ENCODE measurements at regions of chr18 and their contacts with region 1.

Region 1: DNA sequence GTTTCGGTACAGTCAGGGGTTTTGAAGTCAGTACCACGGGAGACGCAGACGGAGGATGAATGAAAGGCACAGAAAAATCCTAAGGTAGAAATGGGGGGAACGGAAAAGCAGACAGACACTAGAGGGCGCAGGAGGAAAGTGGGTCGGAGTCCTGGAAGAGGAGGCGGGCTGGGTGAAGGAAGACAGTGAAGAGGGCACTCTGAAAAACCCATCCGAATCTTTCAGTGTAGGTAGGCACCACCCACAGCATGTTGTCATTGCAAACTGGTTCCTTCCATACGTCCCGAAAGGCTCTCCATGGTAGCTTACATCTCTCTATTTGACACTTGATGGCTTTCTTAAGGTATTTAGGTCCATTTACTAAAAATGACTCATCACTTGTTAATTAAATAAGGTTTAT is 18.5 kb upstream of the ZNF236 start:
- DNase-seq: peak; percentile 76
- H3K4me3 Mint-ChIP-seq: no peak overlapping the region
- H3K27ac Mint-ChIP-seq: no peak overlapping the region
- H3K4me1 Mint-ChIP-seq: peaks cover 18% of the 10 kb centered on the region
- H3K27me3 Mint-ChIP-seq: peaks cover 10% of the 10 kb centered on the region

Region 2: GRCh38 chr18:76398896-76399612 is 404.8 kb before region 1 on chr18:
- CTCF ChIA-PET with region 1: interaction called, 11 read pairs
- POLR2A ChIA-PET with region 1: no interaction called
- DNase-seq: peak; percentile 74
- H3K4me3 Mint-ChIP-seq: no peak overlapping the region
- H3K27ac Mint-ChIP-seq: no peak overlapping the region
- H3K4me1 Mint-ChIP-seq: no peaks in the 10 kb centered on the region
- H3K27me3 Mint-ChIP-seq: peaks cover 9% of the 10 kb centered on the region

Region 3: DNA sequence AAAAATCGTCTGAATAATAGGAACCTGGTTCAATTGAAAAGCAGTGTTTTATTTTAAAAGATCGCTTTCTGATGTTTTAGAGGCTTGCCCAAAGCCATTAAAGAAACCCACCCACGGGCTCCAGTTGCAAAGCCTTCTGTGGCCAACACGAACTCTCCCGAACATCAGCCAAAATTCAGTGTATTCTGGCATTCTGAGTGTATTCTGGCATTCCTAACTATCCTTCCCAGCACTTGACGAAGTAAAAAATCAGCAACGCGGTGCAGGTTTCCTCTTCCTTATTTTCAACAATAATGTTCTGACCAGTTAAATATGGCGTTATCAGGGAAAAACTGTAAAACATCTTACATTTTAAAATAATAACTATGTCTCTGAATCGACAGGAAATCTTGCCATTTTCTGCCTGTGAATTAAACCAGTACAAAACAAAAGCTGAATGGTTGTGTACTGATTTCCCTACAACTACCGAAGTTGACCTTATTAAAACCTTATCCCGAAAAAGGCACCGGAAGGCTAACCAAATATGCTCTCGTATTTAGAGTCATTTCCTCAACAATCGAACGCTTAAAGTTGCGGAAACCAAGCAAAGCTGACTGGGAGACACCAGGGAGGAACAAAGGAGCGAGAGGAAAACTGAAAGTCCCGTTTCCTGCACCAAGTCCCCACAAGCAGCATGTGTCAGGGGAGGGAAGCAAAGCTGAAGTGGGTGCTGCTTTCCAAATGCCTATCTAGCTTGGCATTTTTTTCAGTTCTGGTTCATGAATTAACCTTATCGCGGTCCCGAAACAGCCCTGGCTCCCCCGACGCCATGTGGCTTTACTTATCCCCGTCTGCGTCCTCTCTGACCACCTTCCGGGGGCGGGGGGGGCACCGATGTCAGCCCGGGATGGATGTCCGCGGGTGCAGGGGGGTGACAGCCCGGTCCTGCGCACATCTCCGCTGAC is 353.1 kb before region 1 on chr18:
- CTCF ChIA-PET with region 1: no interaction called
- POLR2A ChIA-PET with region 1: no interaction called
- DNase-seq: no peak
- H3K4me3 Mint-ChIP-seq: peak overlapping the region; percentile 67
- H3K27ac Mint-ChIP-seq: no peak overlapping the region
- H3K4me1 Mint-ChIP-seq: peaks cover 12% of the 10 kb centered on the region
- H3K27me3 Mint-ChIP-seq: peaks cover 38% of the 10 kb centered on the region

Region 4: GRCh38 chr18:76791106-76791505 is 12.7 kb before region 1 on chr18:
- CTCF ChIA-PET with region 1: interaction called, 27 read pairs
- POLR2A ChIA-PET with region 1: no interaction called
- DNase-seq: no peak
- H3K4me3 Mint-ChIP-seq: no peak overlapping the region
- H3K27ac Mint-ChIP-seq: no peak overlapping the region
- H3K4me1 Mint-ChIP-seq: peaks cover 19% of the 10 kb centered on the region
- H3K27me3 Mint-ChIP-seq: peaks cover 23% of the 10 kb centered on the region

Region 5: GRCh38 chr18:76875390-76876325 is 71.8 kb after region 1 on chr18:
- CTCF ChIA-PET with region 1: interaction called, 11 read pairs
- POLR2A ChIA-PET with region 1: no interaction called
- DNase-seq: peak; percentile 56
- H3K4me3 Mint-ChIP-seq: no peak overlapping the region
- H3K27ac Mint-ChIP-seq: peak overlapping the region; percentile 74
- H3K4me1 Mint-ChIP-seq: peaks cover 17% of the 10 kb centered on the region
- H3K27me3 Mint-ChIP-seq: no peaks in the 10 kb centered on the region

Region 6: GRCh38 chr18:76982841-76983587 is 179.2 kb after region 1 on chr18:
- CTCF ChIA-PET with region 1: interaction called, 28 read pairs
- POLR2A ChIA-PET with region 1: no interaction called
- DNase-seq: peak; percentile 90
- H3K4me3 Mint-ChIP-seq: no peak overlapping the region
- H3K27ac Mint-ChIP-seq: no peak overlapping the region
- H3K4me1 Mint-ChIP-seq: peaks cover 6% of the 10 kb centered on the region
- H3K27me3 Mint-ChIP-seq: no peaks in the 10 kb centered on the region

Region 7: DNA sequence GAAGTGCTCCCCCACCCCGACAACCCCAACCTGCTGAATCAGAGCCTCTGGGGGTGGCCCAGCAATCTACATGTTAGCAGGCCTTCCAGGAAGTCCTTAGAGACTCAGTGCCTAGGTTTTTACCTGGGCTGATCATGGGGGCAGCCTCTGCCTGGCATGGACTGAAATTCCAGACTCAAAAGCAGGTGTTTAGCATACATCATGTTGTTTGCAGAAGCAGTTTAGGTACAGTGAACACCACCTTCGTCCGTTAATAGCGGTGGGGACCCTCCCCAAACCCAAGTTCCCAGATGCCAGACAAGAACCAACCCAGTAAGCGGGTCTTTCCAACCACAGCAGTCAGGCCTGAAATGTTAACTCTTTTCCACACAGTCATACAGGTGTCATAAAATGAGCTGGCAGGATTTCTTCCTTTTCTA is 419.4 kb after region 1 on chr18:
- CTCF ChIA-PET with region 1: no interaction called
- POLR2A ChIA-PET with region 1: no interaction called
- DNase-seq: no peak
- H3K4me3 Mint-ChIP-seq: no peak overlapping the region
- H3K27ac Mint-ChIP-seq: no peak overlapping the region
- H3K4me1 Mint-ChIP-seq: no peaks in the 10 kb centered on the region
- H3K27me3 Mint-ChIP-seq: peaks cover 23% of the 10 kb centered on the region

Measured in activated CD4-positive, alpha-beta memory T cell treated with anti-CD3 and anti-CD28 coated beads, Interleukin-2, amount 10 ng/mL, durations not matched to agents 7 days and 5 days (primary cell).